GM12878 (cell line): ENCODE measurements at regions of chr12 and their contacts with region 1.

Region 1: GRCh38 chr12:27252934-27253333 is 8.8 kb downstream of the STK38L start:
- DNase-seq: no peak
- ATAC-seq: peak; percentile 56
- H3K4me3 ChIP-seq: no peak overlapping the region; the same call in 1 of the 2 replicates
- H3K27ac ChIP-seq: peak overlapping the region; percentile 48; the same call in 1 of the 2 replicates
- H3K4me1 ChIP-seq: 0 out of 2 replicates have a peak, but pooled peaks cover 5% of the 10 kb centered on the region
- H3K27me3 ChIP-seq: no peaks in the 10 kb centered on the region
- CTCF ChIP-seq: no peak
- EP300 ChIP-seq: no peak
- POLR2A ChIP-seq: no peak
- RAD21 ChIP-seq: no peak

Region 2: DNA sequence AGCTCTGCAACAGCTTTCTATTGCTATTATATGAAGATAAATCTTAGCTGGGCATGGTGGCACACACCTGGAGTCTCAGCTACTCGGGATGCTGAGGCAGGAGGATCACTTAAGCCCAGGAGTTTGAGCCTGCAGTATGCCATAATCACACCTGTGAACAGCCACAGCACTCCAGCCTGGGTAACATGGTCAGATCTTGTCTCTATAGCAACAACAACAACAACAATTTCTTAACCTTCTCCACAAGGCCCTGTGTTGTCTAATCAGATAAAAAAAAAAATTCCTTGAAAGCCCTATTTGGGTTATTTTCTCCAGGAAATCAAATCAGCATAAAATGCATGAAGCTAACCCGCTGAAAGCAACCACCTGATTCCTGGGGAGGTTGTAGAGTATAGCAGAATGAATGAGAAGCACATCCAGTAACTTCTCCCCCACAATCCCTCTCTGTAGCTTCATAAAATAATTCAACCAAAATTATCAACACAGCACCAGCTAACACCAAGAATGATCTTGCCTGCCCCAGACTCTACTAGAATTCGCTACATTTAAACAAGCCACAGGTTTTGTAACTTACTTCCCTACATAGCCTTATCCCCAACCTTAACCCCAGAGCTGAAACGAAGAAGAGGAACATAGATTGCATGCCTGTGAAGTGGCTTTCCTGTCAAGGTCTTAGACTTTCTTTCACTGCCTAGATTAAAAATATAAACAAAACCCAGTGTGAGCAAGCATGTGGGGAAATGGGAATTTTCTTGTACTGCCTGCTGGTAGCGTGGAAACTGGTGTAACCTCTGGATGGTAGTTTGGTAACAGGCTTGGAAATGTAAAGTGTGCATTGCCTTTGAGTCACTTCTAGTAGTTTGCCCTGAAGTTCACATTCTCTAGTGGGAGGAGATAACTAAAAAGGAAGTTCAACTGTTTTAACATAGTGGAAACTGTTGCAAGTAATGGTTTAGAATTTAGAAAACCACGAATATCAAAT is 14.9 kb before region 1 on chr12:
- CTCF ChIA-PET with region 1: interaction called, 9 read pairs
- POLR2A ChIA-PET with region 1: interaction called, 45 read pairs
- RAD21 ChIA-PET with region 1: interaction called, 49 read pairs
- SMC1A ChIA-PET with region 1: interaction called, 42 read pairs
- in situ Hi-C with region 1: no loop called
- intact Hi-C with region 1: no loop called
- DNase-seq: peak; percentile 72
- ATAC-seq: peak; percentile 82
- H3K4me3 ChIP-seq: peak overlapping the region; percentile 31
- H3K27ac ChIP-seq: peak overlapping the region; percentile 82
- H3K4me1 ChIP-seq: peaks cover 32% of the 10 kb centered on the region
- H3K27me3 ChIP-seq: no peaks in the 10 kb centered on the region
- CTCF ChIP-seq: no peak
- EP300 ChIP-seq: peak in 1 of 2 experiments; percentile 40; a peak in 1 of 4 replicates
- POLR2A ChIP-seq: no peak
- RAD21 ChIP-seq: peak; percentile 7; the same call in 1 of the 2 replicates

Region 3: DNA sequence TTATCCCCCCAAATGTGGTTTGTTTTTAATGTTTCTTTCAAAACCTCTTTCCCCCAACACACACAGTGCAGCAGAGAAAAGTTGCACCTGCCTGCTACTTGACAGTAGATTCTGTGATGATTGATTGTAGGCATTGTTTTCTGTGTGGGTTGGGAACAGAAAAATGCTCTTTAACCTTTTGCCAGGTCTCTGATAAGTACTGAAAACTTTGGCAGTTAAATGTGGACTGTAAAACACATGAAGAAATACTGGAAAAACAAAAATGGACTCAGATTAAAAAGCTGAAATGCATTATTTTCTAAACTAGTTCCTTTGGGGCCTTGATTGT is 19.7 kb after region 1 on chr12:
- CTCF ChIA-PET with region 1: interaction called, 6 read pairs
- POLR2A ChIA-PET with region 1: interaction called, 94 read pairs
- RAD21 ChIA-PET with region 1: interaction called, 33 read pairs
- SMC1A ChIA-PET with region 1: interaction called, 491 read pairs
- in situ Hi-C with region 1: no loop called
- intact Hi-C with region 1: no loop called
- DNase-seq: no peak
- ATAC-seq: peak; percentile 69
- H3K4me3 ChIP-seq: no peak overlapping the region
- H3K27ac ChIP-seq: no peak overlapping the region
- H3K4me1 ChIP-seq: peaks cover 16% of the 10 kb centered on the region
- H3K27me3 ChIP-seq: no peaks in the 10 kb centered on the region
- CTCF ChIP-seq: no peak
- EP300 ChIP-seq: peak in 1 of 2 experiments; percentile 34; a peak in 1 of 4 replicates
- POLR2A ChIP-seq: no peak
- RAD21 ChIP-seq: no peak

Region 4: DNA sequence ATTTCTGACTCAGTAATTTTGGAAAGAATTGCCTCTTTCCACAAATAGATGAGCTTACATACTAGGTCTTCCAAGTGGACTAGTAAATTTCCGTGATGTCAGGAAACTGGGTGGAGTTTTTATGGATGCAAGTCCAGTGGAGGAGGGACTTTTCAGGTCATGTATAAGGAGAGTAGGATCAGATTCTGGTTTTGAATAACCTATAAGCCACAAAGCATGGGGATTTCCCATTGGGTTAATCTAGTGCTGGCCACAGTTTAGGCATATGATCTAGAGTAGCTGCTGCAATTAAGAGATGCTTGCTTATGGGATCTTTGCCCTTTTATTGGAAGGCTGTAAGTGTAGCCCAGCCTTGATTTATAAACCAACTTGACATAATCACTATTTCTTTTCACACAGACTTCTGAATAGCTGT is 24.9 kb after region 1 on chr12:
- CTCF ChIA-PET with region 1: interaction called, 7 read pairs
- POLR2A ChIA-PET with region 1: interaction called, 94 read pairs
- RAD21 ChIA-PET with region 1: interaction called, 53 read pairs
- SMC1A ChIA-PET with region 1: interaction called, 491 read pairs
- in situ Hi-C with region 1: no loop called
- intact Hi-C with region 1: no loop called
- DNase-seq: peak; percentile 73
- ATAC-seq: peak; percentile 91
- H3K4me3 ChIP-seq: no peak overlapping the region
- H3K27ac ChIP-seq: peak overlapping the region; percentile 61; the same call in 1 of the 2 replicates
- H3K4me1 ChIP-seq: peaks cover 22% of the 10 kb centered on the region
- H3K27me3 ChIP-seq: no peaks in the 10 kb centered on the region
- CTCF ChIP-seq: no peak
- EP300 ChIP-seq: peak; percentile 64 to 71; a peak in 3 of 4 replicates
- POLR2A ChIP-seq: no peak
- RAD21 ChIP-seq: no peak

Region 5: DNA sequence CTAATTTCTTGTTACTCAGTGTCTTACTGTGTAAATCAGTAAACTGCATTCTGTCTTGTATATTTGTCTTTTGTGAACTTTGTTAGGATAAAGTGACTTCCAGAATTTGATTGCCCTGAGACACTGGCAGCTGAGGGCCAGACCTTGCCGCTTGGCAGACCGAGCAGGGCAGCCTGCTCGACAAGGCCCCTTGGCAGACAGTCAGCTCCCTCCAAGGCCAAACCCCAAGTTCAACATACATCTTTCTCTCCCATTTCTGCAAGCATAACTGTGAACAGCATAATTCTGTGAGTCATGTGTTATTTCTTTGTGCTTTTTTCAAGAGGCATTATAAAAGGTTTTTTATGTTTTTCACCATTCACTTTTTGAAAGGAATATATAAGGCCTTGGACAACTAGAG is 40.5 kb after region 1 on chr12:
- CTCF ChIA-PET with region 1: interaction called, 4 read pairs
- POLR2A ChIA-PET with region 1: interaction called, 4 read pairs
- RAD21 ChIA-PET with region 1: interaction called, 14 read pairs
- SMC1A ChIA-PET with region 1: interaction called, 491 read pairs
- in situ Hi-C with region 1: no loop called
- intact Hi-C with region 1: no loop called
- DNase-seq: no peak
- ATAC-seq: no peak
- H3K4me3 ChIP-seq: no peak overlapping the region
- H3K27ac ChIP-seq: no peak overlapping the region
- H3K4me1 ChIP-seq: peaks cover 18% of the 10 kb centered on the region
- H3K27me3 ChIP-seq: no peaks in the 10 kb centered on the region
- CTCF ChIP-seq: no peak
- EP300 ChIP-seq: no peak
- POLR2A ChIP-seq: no peak
- RAD21 ChIP-seq: no peak

Region 6: DNA sequence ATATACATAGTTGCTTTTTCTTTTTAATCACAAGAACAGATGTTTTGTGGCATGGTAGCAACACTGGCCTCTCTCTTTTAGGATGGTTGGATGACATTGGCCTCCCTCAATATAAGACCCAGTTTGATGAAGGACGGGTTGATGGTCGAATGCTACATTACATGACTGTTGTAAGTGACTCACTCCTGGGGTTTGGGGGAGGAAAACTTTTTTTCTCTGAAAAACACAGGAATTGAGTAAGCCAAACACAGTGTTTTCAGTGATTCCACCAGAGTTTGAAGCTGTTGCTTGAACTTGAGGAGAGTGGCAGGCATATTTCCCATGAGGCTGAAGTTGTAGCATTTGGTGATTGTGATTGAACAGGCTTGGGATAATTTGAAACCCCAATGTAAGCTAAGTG is 429.6 kb after region 1 on chr12:
- CTCF ChIA-PET with region 1: no interaction called
- POLR2A ChIA-PET with region 1: no interaction called
- RAD21 ChIA-PET with region 1: no interaction called
- SMC1A ChIA-PET with region 1: no interaction called
- in situ Hi-C with region 1: no loop called
- intact Hi-C with region 1: no loop called
- DNase-seq: no peak
- ATAC-seq: no peak
- H3K4me3 ChIP-seq: no peak overlapping the region
- H3K27ac ChIP-seq: no peak overlapping the region
- H3K4me1 ChIP-seq: no peaks in the 10 kb centered on the region
- H3K27me3 ChIP-seq: no peaks in the 10 kb centered on the region
- CTCF ChIP-seq: no peak
- EP300 ChIP-seq: no peak
- POLR2A ChIP-seq: no peak
- RAD21 ChIP-seq: no peak